Ovary (tissue), 10 donors: ENCODE measurements at regions of chr3 and their contacts with region 1.

Region 1: GRCh38 chr3:42101048-42101447 is 9.9 kb downstream of the TRAK1 start:
- DNase-seq: no peak
- H3K4me3 ChIP-seq: no peak overlapping the region
- H3K27ac ChIP-seq: no peak overlapping the region
- H3K4me1 ChIP-seq: peaks cover 3% of the 10 kb centered on the region
- H3K27me3 ChIP-seq: no peaks in the 10 kb centered on the region
- CTCF ChIP-seq: no peak
- EP300 ChIP-seq: no peak
- POLR2A ChIP-seq: no peak

Region 2: GRCh38 chr3:41893977-41894376 is 207.1 kb before region 1 on chr3:
- intact Hi-C with region 1: loop called in 3 of 4 experiments (anchors 5 kb)
- DNase-seq: peak in 1 of 5 donors; percentile 25
- H3K4me3 ChIP-seq: no peak overlapping the region
- H3K27ac ChIP-seq: no peak overlapping the region
- H3K4me1 ChIP-seq: no peaks in the 10 kb centered on the region
- H3K27me3 ChIP-seq: no peaks in the 10 kb centered on the region
- CTCF ChIP-seq: peak in 2 of 3 donors; percentile 19 to 72
- EP300 ChIP-seq: no peak
- POLR2A ChIP-seq: no peak

Region 3: DNA sequence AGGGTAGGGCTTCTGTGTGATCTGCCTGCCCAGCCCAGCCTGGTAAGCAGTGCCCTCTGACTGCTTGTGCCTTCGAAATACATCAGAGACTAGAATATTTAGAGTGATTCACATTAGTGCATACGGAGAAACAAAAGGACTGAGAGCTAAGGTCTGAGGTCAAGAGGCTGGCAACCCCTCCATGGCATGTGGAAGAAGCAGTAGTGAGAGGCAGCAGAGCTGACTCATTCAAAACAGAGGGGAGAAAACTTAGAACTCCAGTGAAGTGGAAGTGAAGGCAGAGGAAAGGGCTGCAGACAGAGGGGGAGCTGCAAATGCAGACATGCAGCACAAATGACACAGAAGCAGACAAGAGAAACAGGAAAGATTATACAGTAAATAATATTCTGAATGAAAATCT is 200.8 kb before region 1 on chr3:
- intact Hi-C with region 1: loop called in 1 of 4 experiments (anchors 5 kb)
- DNase-seq: no peak
- H3K4me3 ChIP-seq: no peak overlapping the region
- H3K27ac ChIP-seq: no peak overlapping the region
- H3K4me1 ChIP-seq: no peaks in the 10 kb centered on the region
- H3K27me3 ChIP-seq: no peaks in the 10 kb centered on the region
- CTCF ChIP-seq: no peak
- EP300 ChIP-seq: no peak
- POLR2A ChIP-seq: no peak

Region 4: DNA sequence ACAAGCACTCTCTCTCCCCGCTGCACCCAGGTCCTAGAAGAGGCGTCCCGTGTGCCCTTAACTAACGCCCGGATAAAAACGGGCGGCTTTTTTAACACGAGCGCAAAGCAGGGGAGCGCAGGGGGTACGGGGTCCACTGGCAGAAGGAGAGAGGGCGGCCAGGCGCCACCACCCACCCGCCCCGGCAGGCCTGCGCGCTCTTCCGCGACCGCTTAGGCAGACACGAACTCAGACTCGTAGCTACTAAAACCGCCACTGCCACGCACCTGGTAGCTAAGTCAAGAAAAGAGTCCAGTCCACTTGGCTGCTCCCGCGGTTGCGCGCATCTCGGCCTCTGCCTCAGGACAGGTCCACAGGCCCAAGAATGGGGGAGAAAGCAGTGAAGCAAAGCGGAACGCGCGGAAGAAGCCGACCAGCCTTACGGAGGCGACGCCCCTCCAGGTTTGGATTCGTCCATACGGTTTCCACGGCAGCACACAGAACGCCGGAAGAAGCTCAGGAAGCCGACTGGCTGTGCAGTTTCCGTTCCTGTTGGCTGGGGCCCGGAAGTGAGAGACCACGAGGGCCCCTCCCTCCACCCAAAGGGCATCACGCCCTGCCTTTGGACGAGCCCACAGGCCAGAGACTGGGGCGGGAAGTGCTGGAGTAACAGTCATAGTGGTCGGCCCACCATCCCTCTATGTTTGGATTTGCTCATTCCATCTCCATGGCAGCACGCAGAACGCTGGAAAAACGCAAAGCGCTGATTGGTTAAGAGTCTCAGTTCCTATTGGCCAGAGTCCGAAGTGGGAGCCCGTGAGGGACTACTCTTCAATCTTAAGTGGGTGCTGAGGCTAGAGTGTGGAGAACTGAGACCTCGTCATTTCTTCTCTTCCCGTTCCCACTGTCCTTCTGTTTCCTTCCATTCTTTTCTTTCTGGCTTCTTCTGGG is 139.0 kb before region 1 on chr3 and contains the start of gene ULK4:
- intact Hi-C with region 1: loop called in 1 of 4 experiments (anchors 5 kb)
- DNase-seq: peak; percentile 96 to 98 (median 97)
- H3K4me3 ChIP-seq: peak within 1 kb of the TSS; percentile 72
- H3K27ac ChIP-seq: peak within 1 kb of the TSS in 1 of 2 donors; percentile 51
- H3K4me1 ChIP-seq: peaks cover 1% of the 10 kb centered on the region
- H3K27me3 ChIP-seq: no peaks in the 10 kb centered on the region
- CTCF ChIP-seq: no peak
- EP300 ChIP-seq: peak; percentile 73
- POLR2A ChIP-seq: peak; percentile 53
- total RNA-seq, gene ULK4: 4.7 to 58.7 (median 9.5) TPM

Region 5: DNA sequence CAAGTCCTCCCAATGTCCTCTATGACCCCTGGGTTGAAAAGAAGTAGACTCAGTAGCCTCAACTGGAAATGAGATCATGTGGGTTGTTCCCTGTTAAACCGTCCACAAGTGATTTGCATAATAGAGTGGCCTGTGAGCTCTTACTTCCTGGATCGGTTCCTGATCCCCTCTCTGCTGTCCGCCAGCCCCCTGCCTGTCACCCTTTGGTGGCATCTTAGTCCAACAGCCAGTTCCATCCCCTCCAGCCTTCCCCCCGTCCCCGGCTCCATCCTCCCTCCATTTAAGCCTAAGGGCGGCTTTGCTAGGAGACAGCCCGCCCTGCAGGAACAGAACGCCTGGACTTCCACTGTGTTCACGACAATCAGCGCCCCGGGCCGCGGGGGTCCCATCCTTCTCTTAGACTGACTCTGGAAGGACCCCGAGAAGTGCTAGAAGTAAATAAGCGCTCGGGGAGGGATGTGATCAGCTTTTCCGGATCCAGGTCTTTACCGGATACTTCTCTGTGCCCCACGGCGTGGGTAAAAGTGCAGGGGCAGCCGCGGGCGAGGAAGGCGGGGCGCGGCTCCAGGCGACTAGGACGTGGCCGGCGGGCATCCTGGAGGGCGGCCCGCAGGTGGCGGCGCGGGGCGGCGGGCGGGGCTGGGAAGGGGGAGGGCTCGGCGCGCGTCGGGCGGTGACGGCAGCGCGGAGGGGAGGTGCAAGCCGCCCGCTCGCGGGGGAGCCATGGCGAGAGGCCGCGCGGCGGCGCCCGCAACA is 87.9 kb before region 1 on chr3:
- intact Hi-C with region 1: loop called in 3 of 4 experiments (anchors 1 to 10 kb)
- DNase-seq: peak; percentile 62 to 80 (median 75)
- H3K4me3 ChIP-seq: peak overlapping the region; percentile 85
- H3K27ac ChIP-seq: peak overlapping the region in 1 of 2 donors; percentile 36
- H3K4me1 ChIP-seq: peaks cover 10% of the 10 kb centered on the region
- H3K27me3 ChIP-seq: no peaks in the 10 kb centered on the region
- CTCF ChIP-seq: no peak
- EP300 ChIP-seq: no peak
- POLR2A ChIP-seq: peak; percentile 25

Region 6: DNA sequence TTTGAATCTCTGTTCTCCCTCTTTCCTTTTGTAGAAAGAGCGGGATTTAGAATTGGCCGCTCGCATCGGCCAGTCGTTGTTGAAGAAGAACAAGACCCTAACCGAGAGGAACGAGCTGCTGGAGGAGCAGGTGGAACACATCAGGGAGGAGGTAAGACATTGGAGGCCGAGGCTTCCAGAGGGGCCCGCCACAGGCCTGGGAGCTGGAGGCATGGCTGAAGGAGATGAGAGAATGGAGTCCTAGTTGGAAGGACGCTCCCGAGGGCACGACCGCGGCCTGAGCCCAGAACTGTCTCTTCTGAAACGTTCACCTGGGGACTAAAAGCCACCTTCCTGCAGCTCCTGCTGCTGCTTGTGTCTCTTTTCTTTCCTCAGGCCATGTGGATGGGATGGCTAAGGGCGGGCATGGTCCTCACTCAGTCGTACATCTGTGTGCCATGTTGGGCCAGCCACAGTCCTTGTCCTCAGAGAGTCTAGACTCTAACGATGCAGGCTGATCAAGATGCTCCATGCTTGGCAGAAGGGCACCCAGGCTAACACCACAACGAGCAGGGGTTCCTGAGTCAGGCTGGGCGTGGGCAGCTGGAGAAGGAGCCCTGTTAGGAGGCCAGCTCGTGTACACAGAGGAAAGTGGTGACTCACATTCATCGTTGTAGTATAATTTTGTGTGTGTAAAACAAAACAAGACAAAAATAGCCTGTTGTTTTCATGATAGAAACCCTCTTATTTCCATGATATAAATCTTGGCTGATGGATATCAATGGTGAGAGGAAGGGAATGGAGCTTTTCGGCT is 83.8 kb after region 1 on chr3:
- intact Hi-C with region 1: no loop called
- DNase-seq: no peak
- H3K4me3 ChIP-seq: no peak overlapping the region
- H3K27ac ChIP-seq: no peak overlapping the region
- H3K4me1 ChIP-seq: peaks cover 2% of the 10 kb centered on the region
- H3K27me3 ChIP-seq: no peaks in the 10 kb centered on the region
- CTCF ChIP-seq: no peak
- EP300 ChIP-seq: no peak
- POLR2A ChIP-seq: no peak

Region 7: GRCh38 chr3:43581343-43581742 is 1480.3 kb after region 1 on chr3:
- intact Hi-C with region 1: no loop called
- DNase-seq: no peak
- H3K4me3 ChIP-seq: no peak overlapping the region
- H3K27ac ChIP-seq: no peak overlapping the region
- H3K4me1 ChIP-seq: peaks cover 1% of the 10 kb centered on the region
- H3K27me3 ChIP-seq: no peaks in the 10 kb centered on the region
- CTCF ChIP-seq: no peak
- EP300 ChIP-seq: no peak
- POLR2A ChIP-seq: no peak